Psoas muscle (tissue), 8 donors: ENCODE measurements at regions of chr1 and their contacts with region 1.

Region 1: GRCh38 chr1:230713915-230714764 is at the start of gene AGT:
- DNase-seq: peak; percentile 83 to 93
- ATAC-seq: peak; percentile 97 to 98 (median 97)
- H3K4me3 ChIP-seq: peak within 1 kb of the TSS; percentile 64
- H3K27ac ChIP-seq: peak within 1 kb of the TSS; percentile 79
- H3K4me1 ChIP-seq: peaks cover 22% of the 10 kb centered on the region
- H3K27me3 ChIP-seq: no peaks in the 10 kb centered on the region
- CTCF ChIP-seq: no peak
- total RNA-seq, gene AGT: 36.1 to 61.7 (median 48.8) TPM

Region 2: GRCh38 chr1:230642263-230642959 is 71.7 kb before region 1 on chr1 and contains the start of gene COG2:
- intact Hi-C with region 1: loop called in 1 of 2 experiments (anchors 2 kb)
- DNase-seq: peak; percentile 95 to 97
- ATAC-seq: peak; percentile 98 to 100 (median 99)
- H3K4me3 ChIP-seq: peak within 1 kb of the TSS; percentile 90
- H3K27ac ChIP-seq: peak within 1 kb of the TSS; percentile 92
- H3K4me1 ChIP-seq: peaks cover 27% of the 10 kb centered on the region
- H3K27me3 ChIP-seq: peaks cover 0 to 3% (median 0%) of the 10 kb centered on the region in 3 donors
- CTCF ChIP-seq: peak; percentile 100
- total RNA-seq, gene COG2: 17.5 to 30.5 (median 25.0) TPM